ENCODE measurements at regions of chr20 and their contacts with region 1.

Region 1: GRCh38 chr20:34516247-34517113 is at the start of gene DYNLRB1:
- DNase-seq: peak; percentile 93 to 96
- ATAC-seq: peak; percentile 93 to 96
- H3K4me3 ChIP-seq: peak within 1 kb of the TSS; percentile 80
- H3K27ac ChIP-seq: peak within 1 kb of the TSS; percentile 95 to 96
- H3K4me1 ChIP-seq: peaks cover 24% of the 10 kb centered on the region
- CTCF ChIP-seq: no peak
- EP300 ChIP-seq: no peak
- POLR2A ChIP-seq: peak; percentile 74
- RAD21 ChIP-seq: no peak
- polyA plus RNA-seq, gene DYNLRB1: 148 and 204 TPM in 2 replicates

Region 2: GRCh38 chr20:34302723-34303528 is 213.6 kb before region 1 on chr20 and contains the start of gene AHCY:
- CTCF ChIA-PET with region 1: interaction called, 3 read pairs
- POLR2A ChIA-PET with region 1: interaction called, 11 read pairs
- DNase-seq: peak; percentile 95 to 98
- ATAC-seq: peak; percentile 96
- H3K4me3 ChIP-seq: peak within 1 kb of the TSS; percentile 90
- H3K27ac ChIP-seq: peak within 1 kb of the TSS; percentile 87 to 94
- H3K4me1 ChIP-seq: peaks cover 36% of the 10 kb centered on the region
- CTCF ChIP-seq: no peak
- EP300 ChIP-seq: no peak
- POLR2A ChIP-seq: peak; percentile 89
- RAD21 ChIP-seq: no peak
- polyA plus RNA-seq, gene AHCY: 274 and 278 TPM in 2 replicates

Region 3: GRCh38 chr20:35297155-35297554 is 780.7 kb after region 1 on chr20:
- CTCF ChIA-PET with region 1: no interaction called
- POLR2A ChIA-PET with region 1: no interaction called
- DNase-seq: peak in 1 of 2 experiments; percentile 40
- ATAC-seq: peak; percentile 52 to 67; a peak in 5 of 6 replicates
- H3K4me3 ChIP-seq: no peak overlapping the region
- H3K27ac ChIP-seq: no peak overlapping the region
- H3K4me1 ChIP-seq: peaks cover 5% of the 10 kb centered on the region; the same call in 2 of the 3 replicates
- CTCF ChIP-seq: no peak
- EP300 ChIP-seq: no peak
- POLR2A ChIP-seq: no peak
- RAD21 ChIP-seq: no peak